WTC11 (cell line): ENCODE measurements at regions of chr1 and their contacts with region 1.

Region 1: DNA sequence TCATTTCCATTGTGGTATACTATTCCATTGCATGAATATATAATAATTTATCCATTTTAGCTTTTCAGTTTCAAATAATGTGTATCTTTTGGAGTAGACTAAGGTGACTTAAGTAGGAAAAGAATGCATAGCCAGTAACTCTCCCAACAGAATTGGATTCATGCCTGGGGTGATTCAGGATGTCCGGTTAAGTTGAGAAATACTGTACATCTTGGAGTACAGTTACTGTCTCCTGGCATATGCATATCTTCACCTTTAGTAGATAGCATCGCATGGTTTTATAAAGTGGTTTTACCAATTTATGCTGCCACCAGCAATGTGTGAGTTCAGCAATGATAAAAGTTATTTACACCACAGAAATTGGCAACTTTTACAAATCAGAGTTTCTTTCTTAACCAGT is 18.6 kb upstream of the SLC6A9 start:
- DNase-seq: no peak
- ATAC-seq: no peak
- H3K4me3 Mint-ChIP-seq: no peak overlapping the region
- H3K27ac Mint-ChIP-seq: no peak overlapping the region
- H3K4me1 Mint-ChIP-seq: no peaks in the 10 kb centered on the region
- H3K27me3 Mint-ChIP-seq: peaks cover 17% of the 10 kb centered on the region
- CTCF ChIP-seq: no peak

Region 2: DNA sequence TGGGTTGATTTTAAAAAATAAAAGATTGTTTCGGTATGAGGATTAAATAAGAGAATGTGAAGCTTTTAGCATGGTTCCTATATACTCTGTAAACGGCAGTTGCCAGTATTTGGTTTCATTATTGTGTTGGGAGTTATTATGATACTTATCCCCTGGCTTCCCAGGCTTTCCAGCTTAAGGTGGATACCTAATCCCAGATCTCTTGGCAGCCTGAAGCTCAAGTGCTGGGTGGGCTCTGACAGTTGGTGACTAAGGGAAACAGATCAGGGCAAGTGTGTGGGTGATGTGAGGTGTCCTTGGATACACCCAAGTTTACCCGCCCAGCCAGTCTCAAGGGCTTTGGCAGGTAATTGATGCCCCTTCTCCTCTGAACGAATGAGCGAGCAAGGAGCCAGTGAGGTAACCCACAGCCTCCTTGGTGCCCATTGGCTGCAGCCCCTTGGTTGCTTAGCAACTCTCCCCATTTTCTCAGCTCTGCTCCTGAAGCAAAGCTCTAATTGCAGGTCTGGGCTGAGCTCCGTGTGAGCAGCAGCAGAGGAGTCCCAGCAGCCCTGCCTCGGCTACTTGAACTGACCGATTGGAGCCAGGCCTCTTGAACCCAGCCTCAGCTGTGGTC is 97.0 kb before region 1 on chr1:
- CTCF ChIA-PET with region 1: interaction called, 11 read pairs
- POLR2A ChIA-PET with region 1: no interaction called
- DNase-seq: peak; percentile 66
- ATAC-seq: peak; percentile 96
- H3K4me3 Mint-ChIP-seq: no peak overlapping the region
- H3K27ac Mint-ChIP-seq: peak overlapping the region; percentile 50; the same call in 1 of the 2 replicates
- H3K4me1 Mint-ChIP-seq: peaks cover 18% of the 10 kb centered on the region
- H3K27me3 Mint-ChIP-seq: no peaks in the 10 kb centered on the region
- CTCF ChIP-seq: no peak

Region 3: GRCh38 chr1:43991476-43992231 is 58.2 kb before region 1 on chr1 and contains the start of gene CCDC24:
- CTCF ChIA-PET with region 1: interaction called, 46 read pairs
- POLR2A ChIA-PET with region 1: no interaction called
- DNase-seq: peak; percentile 82
- ATAC-seq: peak; percentile 70
- H3K4me3 Mint-ChIP-seq: peak within 1 kb of the TSS; percentile 86
- H3K27ac Mint-ChIP-seq: peak within 1 kb of the TSS; percentile 93
- H3K4me1 Mint-ChIP-seq: peaks cover 22% of the 10 kb centered on the region
- H3K27me3 Mint-ChIP-seq: peaks cover 18% of the 10 kb centered on the region
- CTCF ChIP-seq: no peak
- total RNA-seq, gene CCDC24: 12.1 to 20.1 TPM (median 19.2 TPM) in 3 replicates

Region 4: DNA sequence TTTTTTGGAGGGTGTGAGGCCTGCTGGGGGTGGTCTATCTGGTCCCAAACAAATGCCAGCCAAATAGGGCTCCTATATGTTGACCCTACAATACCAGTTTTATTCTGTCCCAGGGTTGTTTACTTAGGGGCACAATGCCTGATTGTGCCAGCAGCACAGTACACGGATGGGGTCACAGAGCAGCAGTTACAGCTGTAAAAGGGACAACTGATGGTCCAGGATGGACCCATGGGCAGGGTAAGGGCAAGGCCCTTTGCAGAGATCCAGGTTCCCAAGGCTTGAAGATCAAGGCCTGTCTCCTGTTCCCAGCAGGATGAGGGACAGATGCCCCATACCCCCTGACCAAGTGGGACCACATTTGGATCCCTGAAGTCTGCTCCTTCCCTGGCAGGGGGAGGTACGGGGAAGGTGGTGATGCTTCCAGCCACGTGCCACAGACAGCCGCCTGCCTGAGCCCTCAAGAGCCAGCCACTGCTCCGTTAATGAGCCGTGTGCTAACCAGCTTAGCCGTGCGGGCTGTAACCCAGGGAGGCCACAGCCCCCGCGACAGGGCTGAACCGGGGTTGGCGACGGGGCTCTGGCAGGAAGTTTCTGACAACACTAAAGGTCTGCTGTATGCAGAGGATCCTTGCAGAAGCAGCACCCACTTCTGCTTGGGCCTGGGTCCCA is 36.8 kb before region 1 on chr1:
- CTCF ChIA-PET with region 1: interaction called, 14 read pairs
- POLR2A ChIA-PET with region 1: no interaction called
- DNase-seq: no peak
- ATAC-seq: no peak
- H3K4me3 Mint-ChIP-seq: no peak overlapping the region
- H3K27ac Mint-ChIP-seq: no peak overlapping the region
- H3K4me1 Mint-ChIP-seq: peaks cover 7% of the 10 kb centered on the region
- H3K27me3 Mint-ChIP-seq: no peaks in the 10 kb centered on the region
- CTCF ChIP-seq: no peak

Region 5: GRCh38 chr1:44103270-44104131 is 53.7 kb after region 1 on chr1:
- CTCF ChIA-PET with region 1: interaction called, 12 read pairs
- POLR2A ChIA-PET with region 1: no interaction called
- DNase-seq: peak; percentile 84
- ATAC-seq: peak; percentile 30
- H3K4me3 Mint-ChIP-seq: no peak overlapping the region
- H3K27ac Mint-ChIP-seq: no peak overlapping the region
- H3K4me1 Mint-ChIP-seq: peaks cover 8% of the 10 kb centered on the region
- H3K27me3 Mint-ChIP-seq: peaks cover 8% of the 10 kb centered on the region
- CTCF ChIP-seq: no peak

Region 6: DNA sequence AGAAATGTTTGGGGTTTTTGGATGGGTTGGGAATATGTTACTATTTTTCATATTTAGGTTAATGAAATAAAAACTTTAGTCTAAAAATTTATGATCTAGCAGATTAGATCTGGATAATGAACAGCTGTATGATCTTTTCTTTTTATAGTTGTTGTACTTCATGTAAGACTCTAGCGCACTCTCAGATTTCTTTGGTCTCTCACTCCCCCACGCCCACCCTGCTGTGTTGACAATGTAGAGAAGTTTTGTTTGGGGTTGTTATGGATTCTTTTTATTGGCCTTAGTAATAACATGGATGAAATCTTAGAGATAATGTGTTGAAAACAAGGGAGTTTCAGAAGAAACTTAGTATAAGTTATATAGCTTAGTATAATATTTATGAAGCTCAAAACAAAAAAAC is 86.0 kb after region 1 on chr1:
- CTCF ChIA-PET with region 1: no interaction called
- POLR2A ChIA-PET with region 1: no interaction called
- DNase-seq: no peak
- ATAC-seq: no peak
- H3K4me3 Mint-ChIP-seq: no peak overlapping the region
- H3K27ac Mint-ChIP-seq: no peak overlapping the region
- H3K4me1 Mint-ChIP-seq: no peaks in the 10 kb centered on the region
- H3K27me3 Mint-ChIP-seq: peaks cover 17% of the 10 kb centered on the region
- CTCF ChIP-seq: no peak